Esophagus squamous epithelium (tissue), 5 donors: ENCODE measurements at regions of chr11 and their contacts with region 1.

Region 1: DNA sequence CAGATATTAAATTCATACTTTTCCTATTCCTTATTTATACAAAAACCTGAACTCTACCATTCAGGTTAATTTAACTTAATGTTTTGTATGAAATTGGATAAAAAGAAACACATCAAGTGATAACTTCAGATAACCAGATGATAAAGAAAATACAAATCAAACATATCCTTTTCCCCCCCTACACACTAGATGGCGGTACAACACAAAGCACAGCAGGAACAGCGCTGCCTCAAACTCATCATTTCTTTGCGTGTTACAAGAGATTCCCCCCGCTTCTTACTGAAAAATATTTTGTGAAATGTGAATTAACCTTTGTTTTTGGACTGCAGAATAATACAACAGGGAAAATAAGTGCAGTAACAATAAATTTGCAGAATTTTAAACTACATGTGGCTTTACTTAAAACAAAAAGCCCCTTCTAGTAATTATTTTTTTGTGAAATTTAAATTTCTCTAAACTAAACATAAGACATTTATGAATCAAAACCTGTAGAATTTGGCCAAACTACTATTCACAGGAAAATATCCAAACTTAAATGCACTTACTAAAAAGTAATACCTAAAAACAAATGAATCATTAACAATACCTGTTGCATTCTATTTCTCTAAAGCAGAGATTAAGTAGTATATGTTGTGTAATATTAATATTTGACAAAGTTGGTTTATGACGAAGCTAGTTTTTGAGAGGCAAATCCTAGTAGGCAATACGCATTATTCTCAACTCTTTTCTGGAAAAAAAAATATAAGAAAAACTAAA is 74.4 kb downstream of the ARHGAP32 start:
- DNase-seq: no peak
- H3K4me3 ChIP-seq: no peak overlapping the region
- H3K27ac ChIP-seq: no peak overlapping the region
- H3K4me1 ChIP-seq: peaks cover 0 to 11% (median 0%) of the 10 kb centered on the region in 3 donors
- H3K27me3 ChIP-seq: no peaks in the 10 kb centered on the region
- CTCF ChIP-seq: peak; percentile 70 to 90 (median 85)
- POLR2A ChIP-seq: no peak

Region 2: DNA sequence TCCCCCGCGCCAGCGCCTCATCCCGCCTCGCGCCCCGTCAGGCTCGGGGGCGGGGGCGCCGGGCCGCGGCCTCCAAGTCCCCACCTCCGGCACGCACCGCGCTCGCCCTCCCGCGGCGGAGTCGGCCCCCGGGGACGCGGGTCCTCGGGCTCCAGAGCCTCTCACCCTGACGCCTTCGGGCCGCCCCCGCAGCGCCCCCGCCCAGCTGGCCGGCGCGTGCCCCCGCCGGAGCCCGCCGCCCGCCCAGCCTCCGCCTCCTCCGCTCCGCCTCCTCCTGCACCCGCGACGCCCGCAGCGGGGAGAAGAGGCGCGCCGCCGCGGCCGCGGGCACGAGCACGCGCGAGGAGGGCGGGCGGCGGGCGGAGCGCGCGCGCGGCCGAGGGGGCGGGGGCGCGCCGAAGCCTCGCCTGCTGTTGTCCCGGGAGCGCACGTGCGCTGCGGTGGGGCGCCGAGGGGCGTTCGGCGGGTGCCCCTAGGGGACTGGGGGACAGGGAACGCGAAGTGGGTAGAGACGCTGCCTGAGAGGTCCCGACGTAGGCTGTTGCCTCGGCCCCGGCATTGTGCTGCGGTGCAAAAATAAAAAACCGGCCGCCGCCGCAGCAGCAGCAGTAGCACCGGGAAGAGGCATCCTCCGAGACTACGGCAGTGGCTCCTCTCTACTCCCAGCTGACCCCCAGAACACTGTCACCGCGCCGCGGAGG is 161.7 kb after region 1 on chr11:
- intact Hi-C with region 1: loop called (anchors 10 kb)
- DNase-seq: no peak
- H3K4me3 ChIP-seq: peak overlapping the region; percentile 41 to 83 (median 74)
- H3K27ac ChIP-seq: peak overlapping the region; percentile 80 to 90 (median 85)
- H3K4me1 ChIP-seq: peaks cover 22 to 87% (median 22%) of the 10 kb centered on the region in 3 donors
- H3K27me3 ChIP-seq: no peaks in the 10 kb centered on the region
- CTCF ChIP-seq: peak in 2 of 6 experiments; percentile 3 to 12
- POLR2A ChIP-seq: peak in 2 of 4 donors; percentile 19 to 49

Region 3: DNA sequence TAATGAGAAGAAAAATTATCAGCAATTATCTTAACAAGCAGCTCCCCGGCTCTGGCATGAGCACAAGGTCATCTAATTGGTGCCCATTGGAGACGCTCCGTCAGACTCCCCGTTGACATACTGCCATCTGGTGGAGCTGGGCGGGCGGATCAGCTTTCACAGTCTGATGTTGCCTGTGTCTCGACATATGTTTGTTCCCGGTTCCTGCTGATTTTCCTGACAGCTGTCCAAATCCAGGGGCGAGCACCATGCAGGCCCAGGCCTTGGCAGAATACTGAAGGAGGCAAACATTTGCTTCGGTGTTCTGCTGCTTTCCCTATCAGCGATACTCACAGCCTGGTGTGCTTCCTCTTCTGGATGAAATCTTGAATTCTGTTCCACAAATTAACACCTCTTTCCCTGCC is 214.1 kb after region 1 on chr11:
- intact Hi-C with region 1: loop called (anchors 5 kb)
- DNase-seq: no peak
- H3K4me3 ChIP-seq: no peak overlapping the region
- H3K27ac ChIP-seq: no peak overlapping the region
- H3K4me1 ChIP-seq: peaks cover 0 to 18% (median 2%) of the 10 kb centered on the region in 3 donors
- H3K27me3 ChIP-seq: no peaks in the 10 kb centered on the region
- CTCF ChIP-seq: peak; percentile 55 to 94 (median 84)
- POLR2A ChIP-seq: no peak

Region 4: GRCh38 chr11:130124096-130124495 is 1006.3 kb after region 1 on chr11:
- intact Hi-C with region 1: no loop called
- DNase-seq: peak; percentile 21
- H3K4me3 ChIP-seq: no peak overlapping the region
- H3K27ac ChIP-seq: peak overlapping the region; percentile 79 to 87 (median 84)
- H3K4me1 ChIP-seq: peaks cover 12 to 45% (median 15%) of the 10 kb centered on the region in 3 donors
- H3K27me3 ChIP-seq: no peaks in the 10 kb centered on the region
- CTCF ChIP-seq: no peak
- POLR2A ChIP-seq: no peak